ENCODE measurements at regions of chr5 and their contacts with region 1.

Region 1: DNA sequence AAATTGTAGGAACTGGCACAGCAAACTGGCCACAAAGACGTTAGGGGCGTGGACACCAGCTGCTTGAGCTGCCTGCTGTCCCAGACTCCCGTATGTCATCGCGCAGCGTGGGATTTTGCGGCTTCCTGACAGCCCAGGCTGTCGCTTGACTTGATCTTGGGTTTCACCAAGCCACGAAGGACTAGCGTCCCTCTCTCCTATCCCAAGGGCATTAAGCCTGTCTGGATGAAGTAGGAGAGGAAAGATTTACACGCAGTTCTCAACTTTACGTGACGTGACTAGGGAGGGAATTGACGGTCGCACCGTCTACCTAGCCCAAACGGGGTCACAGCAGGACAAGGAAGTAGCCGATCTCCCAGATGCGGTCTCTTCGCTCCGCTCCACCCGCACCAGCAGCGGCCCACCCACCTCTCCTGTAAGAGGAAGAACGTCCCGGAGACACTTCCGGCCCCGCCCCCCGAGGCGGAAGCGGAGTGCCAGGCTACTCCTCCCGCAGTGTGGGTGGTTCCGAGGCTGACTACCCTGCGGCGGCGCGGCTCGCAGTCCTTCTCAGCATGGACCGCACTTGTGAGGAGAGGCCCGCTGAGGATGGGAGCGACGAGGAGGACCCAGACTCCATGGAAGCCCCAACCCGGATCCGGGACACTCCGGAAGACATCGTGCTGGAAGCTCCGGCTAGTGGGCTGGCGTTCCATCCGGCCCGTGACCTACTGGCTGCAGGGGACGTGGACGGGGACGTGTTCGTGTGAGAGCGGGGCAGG is at the start of gene WDR55:
- DNase-seq: peak; percentile 98
- ATAC-seq: peak; percentile 95
- H3K4me3 Mint-ChIP-seq: peak within 1 kb of the TSS; percentile 86
- H3K27ac Mint-ChIP-seq: peak within 1 kb of the TSS; percentile 93
- H3K4me1 Mint-ChIP-seq: peaks cover 30% of the 10 kb centered on the region
- H3K27me3 Mint-ChIP-seq: no peaks in the 10 kb centered on the region
- total RNA-seq, gene WDR55: 38.7 to 40.6 TPM

Region 2: DNA sequence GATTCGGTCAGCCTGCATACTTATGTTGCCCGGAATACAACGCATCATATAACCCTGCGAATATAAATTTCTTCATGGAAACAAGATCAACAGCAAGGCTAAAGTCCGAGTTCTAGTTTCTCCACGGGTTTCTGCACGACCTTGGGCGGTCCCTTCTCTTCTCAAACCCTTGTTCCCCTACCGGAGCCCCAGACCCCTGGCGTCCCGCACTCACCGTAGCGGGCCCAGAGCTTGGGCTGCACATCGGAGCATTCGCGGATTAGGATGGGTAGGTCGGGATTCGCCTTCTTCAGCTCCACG is 17.5 kb before region 1 on chr5:
- CTCF ChIA-PET with region 1: interaction called, 10 read pairs
- DNase-seq: no peak
- ATAC-seq: no peak
- H3K4me3 Mint-ChIP-seq: peak overlapping the region; percentile 94
- H3K27ac Mint-ChIP-seq: peak overlapping the region; percentile 98
- H3K4me1 Mint-ChIP-seq: peaks cover 40% of the 10 kb centered on the region
- H3K27me3 Mint-ChIP-seq: no peaks in the 10 kb centered on the region

Region 3: DNA sequence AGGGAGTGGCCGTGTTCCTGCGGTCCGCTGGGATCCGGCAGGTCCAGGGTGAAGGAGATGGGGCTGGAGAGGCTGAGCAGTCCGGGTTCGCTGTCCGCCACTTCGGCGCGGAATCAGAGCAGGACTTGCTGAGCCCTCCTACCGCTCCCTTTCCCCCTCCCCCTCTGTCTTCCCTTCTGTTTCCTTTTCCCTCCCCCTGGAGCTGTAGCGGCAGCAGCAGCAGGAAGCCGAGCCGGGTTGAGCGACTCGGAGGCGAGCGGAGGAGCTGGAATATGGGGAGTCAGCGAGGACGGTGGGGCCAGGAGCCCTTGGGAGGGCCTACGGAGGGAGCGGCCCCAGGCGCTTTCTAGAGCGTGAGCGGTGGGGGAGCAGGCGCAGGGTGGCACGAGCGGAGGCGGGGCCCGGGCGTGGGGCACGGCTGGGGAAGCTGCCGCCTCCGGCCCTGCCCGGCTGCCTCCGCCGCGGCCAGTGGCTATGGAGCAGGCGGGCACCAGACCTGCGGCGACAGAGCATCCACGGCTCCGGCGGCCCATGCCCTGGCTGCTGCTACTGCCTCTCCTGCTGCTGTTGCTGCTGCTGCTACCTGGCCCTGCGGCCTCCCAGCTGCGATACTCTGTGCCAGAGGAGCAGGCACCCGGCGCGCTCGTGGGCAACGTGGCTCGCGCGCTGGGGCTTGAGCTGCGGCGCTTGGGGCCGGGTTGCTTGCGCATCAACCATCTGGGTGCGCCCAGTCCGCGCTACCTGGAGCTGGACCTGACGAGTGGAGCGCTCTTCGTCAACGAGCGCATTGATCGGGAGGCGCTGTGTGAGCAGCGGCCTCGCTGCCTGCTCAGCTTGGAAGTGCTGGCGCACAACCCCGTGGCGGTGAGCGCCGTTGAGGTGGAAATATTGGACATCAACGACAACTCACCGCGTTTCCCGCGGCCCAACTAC is 302.0 kb after region 1 on chr5 and contains the start of gene PCDHAC2:
- CTCF ChIA-PET with region 1: no interaction called
- DNase-seq: no peak
- ATAC-seq: no peak
- H3K4me3 Mint-ChIP-seq: no peak within 1 kb of the TSS
- H3K27ac Mint-ChIP-seq: no peak within 1 kb of the TSS
- H3K4me1 Mint-ChIP-seq: no peaks in the 10 kb centered on the region
- H3K27me3 Mint-ChIP-seq: peaks cover 32% of the 10 kb centered on the region
- total RNA-seq, gene PCDHAC2: not detected